ENCODE measurements at regions of chr12 and their contacts with region 1.

Region 1: DNA sequence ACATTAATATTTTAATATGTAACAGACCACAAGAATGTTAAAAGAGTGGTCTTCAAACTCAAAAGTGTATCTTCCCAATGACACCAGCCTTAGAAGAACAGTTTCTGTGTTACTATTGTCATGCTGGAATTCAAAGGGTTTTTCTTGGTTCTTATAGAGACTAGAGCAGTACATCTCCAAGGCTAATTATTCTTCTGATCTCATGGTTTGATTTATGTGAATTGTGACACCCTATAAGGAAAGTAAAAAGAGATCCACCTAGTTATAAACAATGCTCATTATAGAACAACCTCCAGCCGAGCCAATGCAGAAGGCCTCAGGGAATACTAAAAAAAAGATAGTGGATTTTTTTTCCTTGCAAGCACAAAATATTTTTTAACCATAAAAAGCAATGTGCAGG is 65.5 kb downstream of the PTPRO start:
- DNase-seq: no peak
- H3K4me3 ChIP-seq: no peak overlapping the region
- H3K27ac ChIP-seq: no peak overlapping the region
- H3K4me1 ChIP-seq: no peaks in the 10 kb centered on the region
- H3K27me3 ChIP-seq: peaks cover 0 to 2% of the 10 kb centered on the region in 2 experiments
- CTCF ChIP-seq: no peak
- POLR2A ChIP-seq: no peak

Region 2: GRCh38 chr12:15289192-15289591 is 98.6 kb before region 1 on chr12:
- CTCF ChIA-PET with region 1: no interaction called
- POLR2A ChIA-PET with region 1: no interaction called
- dilution Hi-C with region 1: no loop called
- intact Hi-C with region 1: loop called (anchors 5 kb)
- DNase-seq: no peak
- H3K4me3 ChIP-seq: no peak overlapping the region
- H3K27ac ChIP-seq: no peak overlapping the region
- H3K4me1 ChIP-seq: no peaks in the 10 kb centered on the region
- H3K27me3 ChIP-seq: peaks cover 0 to 5% of the 10 kb centered on the region in 2 experiments
- CTCF ChIP-seq: no peak
- POLR2A ChIP-seq: no peak